HEK293 (cell line): ENCODE measurements at regions of chr17 and their contacts with region 1.

Region 1: GRCh38 chr17:2962236-2962635 is 101.2 kb downstream of the OR1D5 start:
- H3K4me3 ChIP-seq: no peak overlapping the region
- H3K27ac ChIP-seq: no peak overlapping the region
- H3K4me1 ChIP-seq: no peaks in the 10 kb centered on the region
- CTCF ChIP-seq: no peak

Region 2: DNA sequence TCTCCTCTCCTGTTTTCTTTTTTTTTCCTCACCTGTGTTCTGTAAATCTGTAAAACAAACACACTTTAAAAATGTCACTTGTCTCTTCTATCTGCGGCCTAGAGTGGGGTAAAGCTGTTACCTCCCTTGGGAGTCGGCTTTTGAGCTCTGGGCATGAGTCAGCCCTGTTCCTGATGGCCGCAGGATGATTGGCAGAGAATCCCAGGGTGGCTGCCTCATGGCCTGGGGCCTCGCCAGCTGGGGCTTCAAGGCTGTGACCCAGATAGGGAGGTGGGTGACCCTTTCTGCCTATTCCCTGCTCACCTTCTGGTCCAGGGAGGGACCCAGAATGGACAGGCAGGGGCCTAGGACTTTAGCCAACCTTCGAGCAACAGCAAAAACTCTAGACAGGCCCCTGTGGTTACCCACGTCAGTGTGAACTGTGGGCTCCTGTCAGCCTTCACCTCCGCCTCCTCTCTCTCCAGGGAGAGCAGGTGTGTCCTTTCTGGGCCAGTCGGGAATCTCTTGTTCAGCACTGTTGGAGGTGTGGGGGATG is 78.6 kb before region 1 on chr17:
- CTCF ChIA-PET with region 1: no interaction called
- POLR2A ChIA-PET with region 1: no interaction called
- H3K4me3 ChIP-seq: no peak overlapping the region
- H3K27ac ChIP-seq: peak overlapping the region; percentile 16; the same call in 1 of the 2 replicates
- H3K4me1 ChIP-seq: peaks cover 8% of the 10 kb centered on the region
- CTCF ChIP-seq: no peak

Region 3: GRCh38 chr17:2937331-2938003 is 24.8 kb before region 1 on chr17:
- CTCF ChIA-PET with region 1: no interaction called
- POLR2A ChIA-PET with region 1: interaction called, 14 read pairs
- H3K4me3 ChIP-seq: no peak overlapping the region
- H3K27ac ChIP-seq: no peak overlapping the region
- H3K4me1 ChIP-seq: no peaks in the 10 kb centered on the region
- CTCF ChIP-seq: no peak